ENCODE measurements at regions of chr4 and their contacts with region 1.

Region 1: DNA sequence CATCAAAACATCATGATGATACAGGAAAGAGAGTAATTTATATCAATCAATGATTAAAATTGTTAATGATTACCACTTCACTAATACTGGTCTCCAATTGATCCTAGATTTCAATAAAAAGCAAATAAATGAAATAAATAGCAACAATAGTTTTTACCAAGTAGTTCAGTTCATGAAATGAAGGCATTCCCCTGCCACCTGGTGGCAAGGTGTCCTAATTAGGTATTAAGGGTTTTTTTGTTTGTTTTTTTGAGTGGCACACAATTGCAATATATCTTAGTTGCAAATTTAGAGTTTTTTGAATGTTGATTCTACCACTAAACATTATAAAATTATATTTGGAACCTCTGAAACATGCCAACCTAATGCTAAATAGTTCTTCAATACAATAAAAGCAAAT is 157.4 kb upstream of the PDE5A start:
- DNase-seq: no peak
- ATAC-seq: peak in 1 of 2 donors; percentile 30
- H3K4me3 ChIP-seq: no peak overlapping the region
- H3K27ac ChIP-seq: no peak overlapping the region
- H3K4me1 ChIP-seq: no peaks in the 10 kb centered on the region
- H3K27me3 ChIP-seq: no peaks in the 10 kb centered on the region
- CTCF ChIP-seq: peak; percentile 31 to 62 (median 43)
- POLR2A ChIP-seq: no peak

Region 2: DNA sequence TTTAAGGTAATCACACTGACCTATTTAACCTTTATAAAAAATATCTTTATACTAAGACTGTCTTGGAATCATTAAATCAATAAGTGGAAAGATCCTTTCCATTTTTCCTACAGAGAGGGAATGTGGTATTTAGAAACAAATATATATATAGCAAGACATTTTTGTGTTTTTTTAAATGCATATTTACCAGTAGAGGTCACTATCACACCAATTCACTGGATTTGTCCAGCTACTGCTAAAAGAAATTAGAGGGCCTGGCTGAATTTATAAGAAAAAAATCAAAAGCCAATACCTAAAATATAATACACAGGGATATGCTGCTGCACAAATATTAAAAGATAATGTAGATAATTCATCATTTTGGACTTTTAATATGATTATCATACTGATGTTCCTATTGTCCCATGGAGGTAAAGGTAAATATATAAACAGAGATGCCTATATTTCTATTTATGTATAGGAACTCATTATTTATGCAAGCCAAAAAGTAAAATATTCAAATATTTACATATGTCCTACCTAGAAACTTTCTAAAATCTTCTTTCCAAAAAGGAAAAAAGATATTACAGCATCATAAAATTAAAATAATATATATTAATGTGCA is 226.8 kb before region 1 on chr4:
- in situ Hi-C with region 1: loop called in 1 of 4 experiments (anchors 25 kb)
- intact Hi-C with region 1: loop called (anchors 10 kb)
- DNase-seq: no peak
- ATAC-seq: peak in 1 of 2 donors; percentile 21
- H3K4me3 ChIP-seq: no peak overlapping the region
- H3K27ac ChIP-seq: no peak overlapping the region
- H3K4me1 ChIP-seq: no peaks in the 10 kb centered on the region
- H3K27me3 ChIP-seq: no peaks in the 10 kb centered on the region
- CTCF ChIP-seq: peak; percentile 37 to 57 (median 44)
- POLR2A ChIP-seq: no peak

Region 3: GRCh38 chr4:119692001-119692400 is 94.0 kb before region 1 on chr4:
- in situ Hi-C with region 1: no loop called
- intact Hi-C with region 1: loop called (anchors 2 kb)
- DNase-seq: no peak
- ATAC-seq: peak in 1 of 2 donors; percentile 63
- H3K4me3 ChIP-seq: no peak overlapping the region
- H3K27ac ChIP-seq: no peak overlapping the region
- H3K4me1 ChIP-seq: peaks cover 0 to 8% of the 10 kb centered on the region in 2 donors
- H3K27me3 ChIP-seq: no peaks in the 10 kb centered on the region
- CTCF ChIP-seq: peak in 3 of 5 experiments; percentile 22 to 49 (median 26)
- POLR2A ChIP-seq: no peak

Region 4: DNA sequence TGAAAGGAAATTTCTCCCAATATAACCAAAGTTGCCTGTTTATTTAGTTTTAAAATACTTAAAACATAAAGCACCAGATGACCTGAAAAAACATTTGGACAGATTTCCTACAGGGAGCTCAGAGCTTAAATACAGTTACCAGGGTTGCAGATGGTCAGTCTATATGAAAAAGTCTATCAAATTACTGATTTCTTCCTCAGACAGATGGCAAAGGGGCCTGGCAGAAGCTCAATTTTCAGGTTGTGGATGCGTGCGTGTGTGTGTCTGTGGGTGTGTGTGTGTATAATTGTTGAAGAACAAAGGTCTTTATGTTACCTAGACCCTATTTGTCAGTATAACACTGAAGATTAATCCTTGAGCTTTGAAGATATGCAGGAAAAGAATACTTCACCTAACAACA is 111.3 kb after region 1 on chr4:
- in situ Hi-C with region 1: no loop called
- intact Hi-C with region 1: no loop called
- DNase-seq: no peak
- ATAC-seq: no peak
- H3K4me3 ChIP-seq: no peak overlapping the region
- H3K27ac ChIP-seq: no peak overlapping the region
- H3K4me1 ChIP-seq: no peaks in the 10 kb centered on the region
- H3K27me3 ChIP-seq: no peaks in the 10 kb centered on the region
- CTCF ChIP-seq: no peak
- POLR2A ChIP-seq: no peak

Region 5: GRCh38 chr4:120049732-120050494 is 263.9 kb after region 1 on chr4:
- in situ Hi-C with region 1: no loop called
- intact Hi-C with region 1: loop called (anchors 10 kb)
- DNase-seq: peak; percentile 51 to 73
- ATAC-seq: peak; percentile 90 to 92
- H3K4me3 ChIP-seq: peak overlapping the region in 3 of 4 donors; percentile 10 to 30 (median 29)
- H3K27ac ChIP-seq: peak overlapping the region; percentile 11 to 41 (median 28)
- H3K4me1 ChIP-seq: peaks cover 14 to 19% of the 10 kb centered on the region in 2 donors
- H3K27me3 ChIP-seq: no peaks in the 10 kb centered on the region
- CTCF ChIP-seq: peak; percentile 67 to 84 (median 79)
- POLR2A ChIP-seq: no peak